AG04449 (cell line): ENCODE measurements at regions of chr19 and their contacts with region 1.

Region 1: GRCh38 chr19:58499021-58499927 is 12.5 kb downstream of the SLC27A5 start:
- DNase-seq: peak; percentile 89
- H3K4me3 ChIP-seq: peak overlapping the region; percentile 70
- CTCF ChIP-seq: no peak

Region 2: GRCh38 chr19:58513694-58514563 is 14.7 kb after region 1 on chr19:
- CTCF ChIA-PET with region 1: interaction called, 43 read pairs
- POLR2A ChIA-PET with region 1: interaction called, 4 read pairs
- DNase-seq: no peak
- H3K4me3 ChIP-seq: peak overlapping the region; percentile 50
- CTCF ChIP-seq: peak; percentile 80